Sigmoid colon (tissue), 7 donors: ENCODE measurements at regions of chr6 and their contacts with region 1.

Region 1: GRCh38 chr6:30541515-30542403 is 14.5 kb downstream of the GNL1 start:
- DNase-seq: peak; percentile 86
- H3K4me3 ChIP-seq: peak overlapping the region in 2 of 4 donors; percentile 33 to 36
- H3K27ac ChIP-seq: peak overlapping the region in 3 of 4 donors; percentile 21 to 30 (median 29)
- H3K4me1 ChIP-seq: peaks cover 0 to 9% (median 6%) of the 10 kb centered on the region in 4 donors
- H3K27me3 ChIP-seq: no peaks in the 10 kb centered on the region
- CTCF ChIP-seq: peak; percentile 77 to 97 (median 89)
- EP300 ChIP-seq: no peak
- POLR2A ChIP-seq: no peak

Region 2: DNA sequence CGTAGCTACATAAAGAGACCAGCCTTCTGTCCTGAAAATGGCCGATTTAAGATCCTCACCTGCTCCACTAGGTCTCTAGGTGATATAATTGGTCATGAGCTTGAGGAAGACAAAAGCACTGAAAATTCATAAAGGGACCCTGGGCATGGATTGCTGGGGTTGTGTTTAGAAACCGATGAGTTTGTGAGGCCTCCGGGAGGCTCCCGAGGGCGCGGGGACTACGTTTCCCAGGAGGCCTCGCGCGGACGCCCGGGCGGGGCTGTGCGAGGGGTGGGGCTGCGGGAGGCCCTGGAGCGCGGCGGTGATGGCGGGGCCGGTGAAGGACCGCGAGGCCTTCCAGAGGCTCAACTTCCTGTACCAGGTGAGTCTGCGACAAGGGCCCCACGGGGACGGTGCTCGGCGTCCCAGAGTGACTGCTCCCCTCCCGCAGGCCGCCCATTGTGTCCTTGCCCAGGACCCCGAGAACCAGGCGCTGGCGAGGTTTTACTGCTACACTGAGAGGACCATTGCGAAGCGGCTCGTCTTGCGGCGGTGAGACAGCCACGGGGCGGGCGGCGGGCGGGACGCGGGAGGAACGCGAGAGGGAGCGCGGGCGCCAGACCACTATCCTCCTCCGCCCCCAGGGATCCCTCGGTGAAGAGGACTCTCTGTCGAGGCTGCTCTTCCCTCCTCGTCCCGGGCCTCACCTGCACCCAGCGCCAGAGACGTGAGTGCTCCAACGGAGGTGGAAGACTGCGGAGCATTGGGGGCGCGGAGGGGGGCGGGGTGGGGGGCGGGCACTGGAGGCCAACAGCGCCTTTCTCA is 196.7 kb before region 1 on chr6 and contains the start of gene RPP21:
- intact Hi-C with region 1: loop called (anchors 10 kb)
- DNase-seq: peak; percentile 90
- H3K4me3 ChIP-seq: peak within 1 kb of the TSS; percentile 61 to 92 (median 82)
- H3K27ac ChIP-seq: peak within 1 kb of the TSS; percentile 84 to 96 (median 94)
- H3K4me1 ChIP-seq: peaks cover 0 to 15% (median 10%) of the 10 kb centered on the region in 4 donors
- H3K27me3 ChIP-seq: no peaks in the 10 kb centered on the region
- CTCF ChIP-seq: no peak
- EP300 ChIP-seq: no peak
- POLR2A ChIP-seq: peak; percentile 58 to 77
- total RNA-seq, gene RPP21: 134 to 150 (median 141) TPM

Region 3: DNA sequence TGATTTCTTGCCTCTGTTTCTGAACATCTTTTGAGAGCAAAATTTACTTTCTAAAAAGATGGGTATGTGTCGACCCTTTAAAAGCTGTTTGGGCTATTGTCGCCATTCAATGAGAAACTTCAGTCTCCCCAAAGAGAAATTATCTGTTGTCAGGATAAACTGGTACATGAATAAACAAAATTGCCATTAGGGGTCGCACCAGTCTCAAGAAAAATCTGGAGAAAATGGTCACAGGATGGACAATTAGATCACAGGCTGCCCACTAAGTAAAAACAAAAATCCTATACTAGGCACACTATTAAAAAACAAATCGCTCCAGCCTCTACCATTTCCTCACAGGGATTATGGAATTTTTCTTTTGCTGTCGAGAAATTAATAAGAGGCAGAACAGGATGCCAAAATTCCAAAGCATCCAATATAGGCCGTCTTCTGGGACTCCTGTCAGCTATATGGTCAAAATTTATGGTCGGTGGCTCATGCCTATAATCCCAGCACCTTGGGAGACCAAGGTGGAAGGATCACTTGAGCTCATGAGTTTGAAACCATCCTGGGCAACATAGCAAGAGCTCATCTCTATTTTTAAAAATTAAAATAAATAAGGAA is 58.0 kb before region 1 on chr6:
- intact Hi-C with region 1: loop called (anchors 1 kb)
- DNase-seq: no peak
- H3K4me3 ChIP-seq: no peak overlapping the region
- H3K27ac ChIP-seq: no peak overlapping the region
- H3K4me1 ChIP-seq: peaks cover 0 to 17% (median 8%) of the 10 kb centered on the region in 4 donors
- H3K27me3 ChIP-seq: peaks cover 13 to 35% (median 27%) of the 10 kb centered on the region in 3 donors
- CTCF ChIP-seq: peak; percentile 32 to 52 (median 36)
- EP300 ChIP-seq: no peak
- POLR2A ChIP-seq: no peak

Region 4: DNA sequence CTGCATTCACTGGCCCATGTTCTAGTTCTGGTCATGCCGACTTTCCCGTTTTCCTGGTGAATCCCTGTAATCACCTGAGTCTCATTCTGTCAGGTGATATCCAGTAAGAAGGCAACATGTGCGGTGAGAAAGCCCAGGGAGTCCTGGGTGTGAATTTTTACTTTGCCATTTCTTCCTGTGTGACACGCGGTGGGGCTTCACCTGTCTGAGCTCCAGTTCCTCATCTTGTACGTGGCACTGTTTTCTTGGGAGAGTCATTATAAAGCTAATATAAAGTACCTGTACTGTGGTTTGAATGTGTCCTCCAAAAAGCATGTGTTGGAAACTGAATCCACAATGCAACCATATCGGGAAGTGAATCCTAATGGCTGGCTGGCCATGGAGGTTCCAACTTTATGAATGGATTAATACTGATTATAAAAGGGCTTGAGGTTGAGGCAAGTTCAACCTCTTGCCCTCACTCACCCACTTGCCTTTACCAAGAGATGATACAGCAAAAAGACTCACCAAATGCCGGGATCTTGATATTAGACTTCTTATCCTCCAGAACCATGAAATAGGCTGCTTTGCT is 47.4 kb before region 1 on chr6:
- intact Hi-C with region 1: no loop called
- DNase-seq: no peak
- H3K4me3 ChIP-seq: no peak overlapping the region
- H3K27ac ChIP-seq: no peak overlapping the region
- H3K4me1 ChIP-seq: peaks cover 0 to 34% (median 26%) of the 10 kb centered on the region in 4 donors
- H3K27me3 ChIP-seq: no peaks in the 10 kb centered on the region
- CTCF ChIP-seq: no peak
- EP300 ChIP-seq: no peak
- POLR2A ChIP-seq: no peak

Region 5: DNA sequence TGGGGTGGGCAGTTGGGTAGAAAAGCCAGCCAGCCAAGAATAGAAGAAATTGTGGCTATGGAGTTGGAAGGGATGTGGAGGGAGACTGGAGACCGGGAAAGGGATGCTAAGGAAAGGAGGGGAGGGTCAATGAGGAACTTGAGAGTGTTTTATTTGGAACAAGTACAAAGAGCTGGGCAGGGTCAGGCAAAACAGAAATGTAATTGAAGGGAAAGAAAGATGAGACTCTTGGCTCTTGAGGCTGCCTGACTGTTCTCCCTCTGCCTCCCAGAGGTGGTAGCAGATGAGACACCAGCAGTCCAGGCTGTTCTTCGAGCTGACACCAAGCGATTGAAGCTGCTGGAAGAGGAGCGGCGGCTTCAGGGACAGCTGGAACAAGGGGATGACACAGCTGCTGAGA is 42.2 kb after region 1 on chr6:
- intact Hi-C with region 1: no loop called
- DNase-seq: no peak
- H3K4me3 ChIP-seq: no peak overlapping the region
- H3K27ac ChIP-seq: no peak overlapping the region
- H3K4me1 ChIP-seq: no peaks in the 10 kb centered on the region
- H3K27me3 ChIP-seq: no peaks in the 10 kb centered on the region
- CTCF ChIP-seq: no peak
- EP300 ChIP-seq: no peak
- POLR2A ChIP-seq: no peak

Region 6: DNA sequence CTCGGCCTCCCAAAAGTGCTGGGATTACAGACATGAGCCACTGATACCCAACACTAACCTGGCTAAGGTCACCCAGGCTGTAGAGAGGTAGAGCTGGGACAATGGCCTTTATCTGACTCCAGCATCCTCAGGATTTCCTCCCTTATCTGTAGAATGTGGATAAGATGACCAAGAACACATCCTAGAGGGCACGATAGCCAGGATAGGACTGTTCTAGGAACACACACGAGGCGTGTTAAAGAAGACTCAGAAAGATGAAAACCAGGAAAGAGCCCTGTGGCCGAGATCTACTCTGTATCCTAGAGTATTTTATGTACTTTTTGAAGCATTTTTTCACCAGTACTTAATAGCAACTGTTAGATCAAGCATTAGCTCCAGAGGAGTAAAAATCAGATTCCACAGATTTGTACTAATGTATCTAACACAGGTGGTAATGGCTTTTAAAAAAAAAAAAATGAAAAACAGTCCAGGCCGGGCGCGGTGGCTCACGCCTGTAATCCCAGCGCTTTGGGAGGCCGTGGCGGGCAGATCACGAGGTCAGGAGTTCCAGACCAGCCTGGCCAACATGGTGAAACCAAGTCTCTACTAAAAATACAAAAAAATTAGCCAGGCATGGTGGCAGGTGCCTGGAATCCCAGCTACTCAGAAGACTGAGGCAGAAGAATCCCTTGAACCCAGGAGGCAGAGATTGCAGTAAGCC is 58.0 kb after region 1 on chr6:
- intact Hi-C with region 1: loop called (anchors 5 kb)
- DNase-seq: no peak
- H3K4me3 ChIP-seq: no peak overlapping the region
- H3K27ac ChIP-seq: no peak overlapping the region
- H3K4me1 ChIP-seq: no peaks in the 10 kb centered on the region
- H3K27me3 ChIP-seq: no peaks in the 10 kb centered on the region
- CTCF ChIP-seq: no peak
- EP300 ChIP-seq: no peak
- POLR2A ChIP-seq: no peak